ENCODE measurements at regions of chr13 and their contacts with region 1.

Region 1: DNA sequence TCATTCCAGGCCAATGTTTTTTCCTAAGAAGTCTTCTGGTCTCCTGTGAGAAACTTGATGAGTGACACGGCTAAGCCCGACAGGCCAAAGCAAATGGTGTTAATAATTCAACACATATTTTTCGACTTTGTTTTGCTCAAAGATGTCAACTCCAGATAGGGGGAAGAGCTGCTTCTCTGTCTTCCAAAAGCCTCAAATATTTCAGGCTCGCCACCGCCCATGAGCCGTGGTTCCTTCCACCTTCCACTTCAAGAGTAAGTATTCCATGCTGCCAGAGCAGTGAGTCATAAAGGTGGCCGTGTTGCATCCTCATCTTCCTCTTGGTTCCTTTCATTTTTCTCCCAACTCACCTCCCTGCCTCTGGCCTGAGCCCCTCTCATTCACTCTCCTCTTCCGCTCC is 272.6 kb downstream of the EFNB2 start:
- DNase-seq: no peak
- ATAC-seq: no peak
- H3K4me3 Mint-ChIP-seq: no peak overlapping the region
- H3K27ac Mint-ChIP-seq: no peak overlapping the region
- H3K4me1 Mint-ChIP-seq: no peaks in the 10 kb centered on the region
- H3K27me3 Mint-ChIP-seq: peaks cover 4% of the 10 kb centered on the region

Region 2: DNA sequence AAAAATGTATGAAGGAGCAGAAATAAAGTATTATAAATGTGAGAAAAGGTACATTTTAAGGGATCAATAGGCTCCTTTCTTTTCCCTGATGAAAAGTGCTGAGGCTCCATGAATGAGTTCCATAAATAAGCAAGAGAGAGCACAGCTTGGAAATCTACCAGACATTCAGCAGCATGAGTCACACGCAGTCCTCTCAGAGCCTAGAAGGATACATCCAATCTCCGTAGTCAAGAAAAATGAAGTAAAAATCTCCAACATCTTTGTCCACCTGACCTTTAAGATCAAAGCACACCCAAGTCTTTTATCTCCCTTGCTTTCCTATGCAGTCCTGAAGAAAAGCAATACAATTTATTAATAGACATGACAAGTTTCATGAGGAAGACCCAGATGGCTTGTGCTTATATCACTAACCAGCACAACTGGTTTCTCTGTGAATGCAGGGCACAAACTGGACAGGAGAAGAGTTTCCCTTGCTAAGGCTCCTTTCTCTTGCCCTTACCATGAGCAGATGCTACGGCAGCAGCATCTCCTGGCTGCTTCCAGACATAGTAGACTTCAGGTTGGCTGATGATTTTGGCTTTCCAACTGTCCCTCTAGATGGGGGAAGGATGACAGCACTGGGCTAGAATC is 458.2 kb before region 1 on chr13:
- CTCF ChIA-PET with region 1: no interaction called
- POLR2A ChIA-PET with region 1: no interaction called
- intact Hi-C with region 1: loop called in 1 of 2 experiments (anchors 5 kb)
- DNase-seq: no peak
- ATAC-seq: no peak
- H3K4me3 Mint-ChIP-seq: no peak overlapping the region
- H3K27ac Mint-ChIP-seq: no peak overlapping the region
- H3K4me1 Mint-ChIP-seq: no peaks in the 10 kb centered on the region
- H3K27me3 Mint-ChIP-seq: no peaks in the 10 kb centered on the region

Region 3: DNA sequence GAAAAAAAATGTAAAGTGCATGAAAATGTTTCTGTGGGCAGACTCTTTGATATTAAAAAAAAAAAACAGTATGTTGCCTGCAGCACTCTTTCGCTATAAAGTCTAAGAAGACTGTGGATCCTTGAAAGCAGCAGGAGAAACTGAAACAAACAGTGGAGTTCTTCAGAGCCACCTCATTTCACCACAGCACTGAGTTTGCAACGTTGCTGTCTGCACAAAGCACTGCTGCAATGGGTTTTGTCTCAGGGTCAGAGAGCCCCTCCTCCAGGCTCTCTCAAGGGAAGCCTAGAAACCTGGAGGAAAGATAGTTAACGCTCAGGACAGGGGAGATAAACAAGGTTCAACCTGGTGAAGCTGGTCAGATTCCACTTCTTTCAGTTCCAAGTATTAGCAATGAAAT is 23.9 kb after region 1 on chr13:
- CTCF ChIA-PET with region 1: no interaction called
- POLR2A ChIA-PET with region 1: no interaction called
- intact Hi-C with region 1: loop called in 1 of 2 experiments (anchors 1 kb)
- DNase-seq: no peak
- ATAC-seq: no peak
- H3K4me3 Mint-ChIP-seq: no peak overlapping the region
- H3K27ac Mint-ChIP-seq: no peak overlapping the region
- H3K4me1 Mint-ChIP-seq: no peaks in the 10 kb centered on the region
- H3K27me3 Mint-ChIP-seq: peaks cover 7% of the 10 kb centered on the region

Region 4: DNA sequence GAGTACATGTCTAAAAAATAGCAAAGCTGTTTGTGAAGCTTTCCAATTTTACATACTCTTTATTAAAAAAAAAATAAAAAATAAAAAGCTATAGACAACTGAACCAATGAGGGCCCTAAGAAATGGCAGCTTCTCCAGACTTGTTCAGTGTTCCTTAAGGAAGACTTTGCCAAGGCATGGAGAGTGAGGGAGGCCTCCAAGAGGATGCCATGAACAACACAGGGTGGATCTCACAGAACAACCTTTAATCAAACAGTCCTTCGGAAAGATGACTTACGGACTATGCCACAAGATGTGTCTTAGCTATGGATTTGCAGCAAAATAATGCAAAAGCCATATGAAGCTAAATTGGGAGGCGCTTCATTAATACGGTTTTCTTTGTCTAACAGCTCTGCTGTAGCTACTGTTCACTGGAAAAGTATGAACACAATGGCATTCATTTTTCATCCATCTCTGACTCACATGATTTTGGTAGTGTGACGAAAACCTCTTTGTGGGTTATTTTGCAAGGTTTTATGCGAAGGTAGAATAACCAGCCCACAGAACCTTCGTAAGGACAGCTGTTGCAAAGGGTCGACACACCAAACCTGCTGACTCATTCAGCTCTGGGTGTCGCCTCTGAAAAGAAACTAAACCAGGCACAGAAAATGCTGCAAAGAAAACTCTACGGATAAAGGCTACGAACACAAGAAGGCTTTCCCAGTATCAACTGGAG is 244.8 kb after region 1 on chr13:
- CTCF ChIA-PET with region 1: no interaction called
- POLR2A ChIA-PET with region 1: no interaction called
- intact Hi-C with region 1: no loop called
- DNase-seq: peak; percentile 16
- ATAC-seq: peak; percentile 55
- H3K4me3 Mint-ChIP-seq: no peak overlapping the region
- H3K27ac Mint-ChIP-seq: no peak overlapping the region
- H3K4me1 Mint-ChIP-seq: peaks cover 2% of the 10 kb centered on the region
- H3K27me3 Mint-ChIP-seq: peaks cover 13% of the 10 kb centered on the region